ENCODE measurements at regions of chr18 and their contacts with region 1.

Region 1: GRCh38 chr18:4858378-4859127 is 338.5 kb downstream of the AKAIN1 start:
- DNase-seq: no peak
- ATAC-seq: no peak
- H3K4me3 ChIP-seq: no peak overlapping the region
- H3K27ac ChIP-seq: no peak overlapping the region
- H3K4me1 ChIP-seq: no peaks in the 10 kb centered on the region
- H3K27me3 ChIP-seq: no peaks in the 10 kb centered on the region
- CTCF ChIP-seq: no peak
- EP300 ChIP-seq: no peak
- POLR2A ChIP-seq: no peak
- RAD21 ChIP-seq: no peak

Region 2: GRCh38 chr18:4658804-4659203 is 199.7 kb before region 1 on chr18:
- CTCF ChIA-PET with region 1: no interaction called
- POLR2A ChIA-PET with region 1: no interaction called
- in situ Hi-C with region 1: no loop called
- intact Hi-C with region 1: loop called (anchors 5 kb)
- DNase-seq: no peak
- ATAC-seq: no peak
- H3K4me3 ChIP-seq: no peak overlapping the region
- H3K27ac ChIP-seq: no peak overlapping the region
- H3K4me1 ChIP-seq: no peaks in the 10 kb centered on the region
- H3K27me3 ChIP-seq: no peaks in the 10 kb centered on the region
- CTCF ChIP-seq: no peak
- EP300 ChIP-seq: no peak
- POLR2A ChIP-seq: no peak
- RAD21 ChIP-seq: no peak

Measured in HepG2 (cell line).